ENCODE measurements at regions of chr12 and their contacts with region 1.

Region 1: GRCh38 chr12:119115296-119115905 is 63.3 kb upstream of the HSPB8 start:
- DNase-seq: peak in 4 of 10 donors; percentile 20 to 33 (median 28)

Region 2: DNA sequence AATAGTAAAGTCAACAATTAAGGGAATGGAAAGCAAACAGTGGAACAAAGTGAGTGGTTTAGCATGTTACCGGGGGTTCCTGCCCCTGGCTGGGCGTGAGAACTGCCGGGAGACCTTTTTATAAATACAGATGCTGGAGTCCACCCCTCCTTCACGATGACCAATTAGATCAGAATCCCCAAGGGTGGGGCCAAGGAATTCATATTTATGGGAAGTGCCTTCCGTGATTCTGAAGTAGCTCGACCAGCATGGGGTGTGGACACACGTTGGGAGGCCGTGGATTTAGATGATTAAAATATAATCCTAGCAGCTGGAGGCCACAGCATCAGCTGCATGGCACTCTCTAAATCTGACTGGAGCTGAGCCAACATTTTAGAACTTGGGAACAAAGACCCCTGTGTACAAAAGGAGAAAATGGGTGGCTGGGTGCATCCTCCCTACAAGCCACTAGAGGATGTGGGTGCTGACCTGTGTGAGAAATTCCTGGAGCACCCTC is 46.2 kb before region 1 on chr12:
- intact Hi-C with region 1: no loop called
- DNase-seq: no peak

Region 3: DNA sequence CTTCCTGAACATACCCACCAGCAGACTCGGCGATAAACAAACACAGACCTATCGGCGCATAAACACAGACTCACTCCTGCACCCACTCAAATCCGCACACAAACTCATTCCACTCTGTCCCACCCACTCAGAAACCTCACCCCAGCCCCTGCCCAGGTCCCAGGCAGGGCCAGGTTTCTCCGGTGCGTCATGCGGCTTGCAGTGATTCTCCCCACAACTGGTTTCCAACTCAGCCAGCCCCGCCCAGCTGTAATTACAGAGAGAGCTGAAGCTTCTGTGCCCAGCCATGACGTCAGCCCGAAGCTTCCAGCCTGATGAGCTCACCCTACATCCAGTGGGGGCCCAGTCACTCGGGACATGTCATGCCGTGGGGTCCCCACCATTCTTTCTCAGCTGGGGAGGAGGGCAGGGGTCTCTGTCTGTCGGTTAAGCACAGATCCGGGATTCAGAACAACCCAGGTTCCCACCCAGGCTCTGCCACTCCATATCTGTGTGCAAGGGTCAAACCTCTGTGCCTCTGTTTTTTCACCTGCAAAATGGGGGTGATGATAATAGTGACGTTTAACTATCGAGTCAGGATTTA is 61.0 kb after region 1 on chr12:
- intact Hi-C with region 1: no loop called
- DNase-seq: peak; percentile 37 to 97 (median 74)

Region 4: GRCh38 chr12:119412811-119413794 is 297.7 kb after region 1 on chr12:
- intact Hi-C with region 1: loop called (anchors 2 kb)
- DNase-seq: peak; percentile 37 to 94 (median 76)

Region 5: DNA sequence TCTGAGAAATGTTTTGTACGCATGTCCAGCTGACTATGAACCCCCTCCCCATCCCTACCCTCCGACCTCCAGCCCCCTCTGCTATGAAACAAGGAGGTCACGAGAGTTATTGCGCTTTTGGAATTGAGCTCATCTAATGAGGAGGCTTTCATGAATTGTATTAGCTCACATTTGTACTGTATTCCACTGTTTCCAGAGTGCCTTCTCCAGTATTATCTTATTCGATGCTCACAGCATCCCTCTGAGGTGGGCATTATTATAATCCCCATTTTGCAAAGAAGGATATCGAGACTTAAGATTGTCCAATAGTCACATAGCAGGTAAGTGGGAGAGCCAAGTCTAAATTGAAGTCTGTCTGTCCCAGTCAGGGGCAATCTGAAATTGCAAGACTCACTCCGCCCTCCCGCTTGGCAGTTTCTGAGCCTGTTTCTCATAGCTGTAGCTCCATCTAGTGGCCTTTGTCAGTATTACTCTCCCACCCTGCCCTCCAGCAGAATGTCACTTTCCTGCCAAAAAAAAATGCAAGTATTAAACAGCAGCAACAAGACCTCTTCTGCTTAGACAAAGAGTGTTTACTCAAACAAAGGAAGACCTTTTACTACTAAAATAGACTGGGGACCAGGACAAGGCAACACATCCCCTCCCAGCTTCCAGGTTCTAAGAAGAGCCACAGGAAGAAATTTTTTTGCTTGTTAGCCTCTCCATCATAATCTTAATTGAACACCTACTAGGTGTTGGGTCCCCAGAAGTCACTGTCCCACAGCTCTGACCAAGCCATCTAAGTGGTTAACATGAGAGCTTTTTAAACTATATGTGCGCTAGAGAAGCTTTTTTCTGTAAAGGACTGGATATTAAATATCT is 429.6 kb after region 1 on chr12:
- intact Hi-C with region 1: loop called (anchors 10 kb)
- DNase-seq: peak in 9 of 10 donors; percentile 29 to 92 (median 63)

Measured in posterior cingulate gyrus (tissue), 11 donors.